HepG2 (cell line): ENCODE measurements at regions of chr14 and their contacts with region 1.

Region 1: GRCh38 chr14:100914546-100915021 is 11.1 kb upstream of the RTL1 start:
- DNase-seq: no peak
- ATAC-seq: no peak
- H3K4me3 ChIP-seq: no peak overlapping the region
- H3K27ac ChIP-seq: no peak overlapping the region
- H3K4me1 ChIP-seq: no peaks in the 10 kb centered on the region
- H3K27me3 ChIP-seq: peaks cover 0 to 13% of the 10 kb centered on the region in 2 experiments; a peak in 2 of 5 replicates
- CTCF ChIP-seq: no peak
- EP300 ChIP-seq: no peak
- POLR2A ChIP-seq: no peak
- RAD21 ChIP-seq: no peak

Region 2: DNA sequence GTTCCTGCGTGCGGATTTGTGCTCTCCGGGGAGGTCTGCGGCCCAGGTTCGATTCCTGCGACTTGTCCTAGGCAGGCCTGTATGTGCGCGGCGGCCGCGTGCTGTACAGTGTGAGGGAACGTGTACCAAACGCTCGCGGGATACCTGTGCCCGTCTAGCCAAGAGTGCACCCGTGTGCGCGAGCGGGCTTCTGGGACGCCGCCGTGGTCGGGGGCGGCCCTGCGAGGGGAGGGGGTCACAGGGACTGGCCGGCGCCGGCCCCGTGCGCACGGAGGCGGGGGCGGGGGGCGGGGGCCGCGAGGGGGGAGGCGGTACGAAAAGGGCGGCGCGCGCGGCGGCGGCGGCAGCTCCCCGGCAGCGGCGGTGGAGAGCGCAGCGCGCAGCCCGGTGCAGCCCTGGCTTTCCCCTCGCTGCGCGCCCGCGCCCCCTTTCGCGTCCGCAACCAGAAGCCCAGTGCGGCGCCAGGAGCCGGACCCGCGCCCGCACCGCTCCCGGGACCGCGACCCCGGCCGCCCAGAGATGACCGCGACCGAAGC is 188.0 kb before region 1 on chr14 and contains the start of gene DLK1:
- CTCF ChIA-PET with region 1: no interaction called
- POLR2A ChIA-PET with region 1: no interaction called
- in situ Hi-C with region 1: no loop called
- intact Hi-C with region 1: no loop called
- DNase-seq: no peak
- ATAC-seq: peak; percentile 55
- H3K4me3 ChIP-seq: peak within 1 kb of the TSS; percentile 47 to 77 (median 63)
- H3K27ac ChIP-seq: peak within 1 kb of the TSS; percentile 59
- H3K4me1 ChIP-seq: peaks cover 64% of the 10 kb centered on the region
- H3K27me3 ChIP-seq: peaks cover 5 to 13% of the 10 kb centered on the region in 2 experiments; a peak in 4 of 5 replicates
- CTCF ChIP-seq: no peak
- EP300 ChIP-seq: no peak
- POLR2A ChIP-seq: peak in 1 of 2 experiments; percentile 56; a peak in 1 of 4 replicates
- RAD21 ChIP-seq: no peak
- total RNA-seq, gene DLK1: 48.2 and 95.5 TPM in 2 replicates

Region 3: GRCh38 chr14:101628471-101628966 is 713.9 kb after region 1 on chr14:
- CTCF ChIA-PET with region 1: no interaction called
- POLR2A ChIA-PET with region 1: no interaction called
- in situ Hi-C with region 1: loop called (anchors 5 kb)
- intact Hi-C with region 1: no loop called
- DNase-seq: peak; percentile 25
- ATAC-seq: peak; percentile 84
- H3K4me3 ChIP-seq: peak overlapping the region in 2 of 3 experiments; percentile 34 to 59; a peak in 3 of 6 replicates
- H3K27ac ChIP-seq: no peak overlapping the region
- H3K4me1 ChIP-seq: peaks cover 15% of the 10 kb centered on the region
- H3K27me3 ChIP-seq: peaks cover 1 to 21% of the 10 kb centered on the region in 2 experiments; a peak in 3 of 5 replicates
- CTCF ChIP-seq: peak; percentile 96
- EP300 ChIP-seq: no peak
- POLR2A ChIP-seq: no peak
- RAD21 ChIP-seq: peak; percentile 97